PC-3 (cell line): ENCODE measurements at regions of chr10 and their contacts with region 1.

Region 1: GRCh38 chr10:63003816-63004453 is 129.2 kb upstream of the NRBF2 start:
- DNase-seq: peak; percentile 87
- ATAC-seq: peak; percentile 39
- H3K4me3 ChIP-seq: no peak overlapping the region
- H3K27ac ChIP-seq: no peak overlapping the region
- H3K4me1 ChIP-seq: peaks cover 16% of the 10 kb centered on the region
- H3K27me3 ChIP-seq: no peaks in the 10 kb centered on the region
- CTCF ChIP-seq: peak; percentile 99

Region 2: GRCh38 chr10:62492012-62492869 is 511.7 kb before region 1 on chr10:
- CTCF ChIA-PET with region 1: no interaction called
- POLR2A ChIA-PET with region 1: no interaction called
- intact Hi-C with region 1: loop called (anchors 5 kb)
- DNase-seq: peak; percentile 92
- ATAC-seq: peak; percentile 90
- H3K4me3 ChIP-seq: no peak overlapping the region
- H3K27ac ChIP-seq: no peak overlapping the region
- H3K4me1 ChIP-seq: no peaks in the 10 kb centered on the region
- H3K27me3 ChIP-seq: peaks cover 7% of the 10 kb centered on the region; the same call in 1 of the 2 replicates
- CTCF ChIP-seq: peak; percentile 100

Region 3: DNA sequence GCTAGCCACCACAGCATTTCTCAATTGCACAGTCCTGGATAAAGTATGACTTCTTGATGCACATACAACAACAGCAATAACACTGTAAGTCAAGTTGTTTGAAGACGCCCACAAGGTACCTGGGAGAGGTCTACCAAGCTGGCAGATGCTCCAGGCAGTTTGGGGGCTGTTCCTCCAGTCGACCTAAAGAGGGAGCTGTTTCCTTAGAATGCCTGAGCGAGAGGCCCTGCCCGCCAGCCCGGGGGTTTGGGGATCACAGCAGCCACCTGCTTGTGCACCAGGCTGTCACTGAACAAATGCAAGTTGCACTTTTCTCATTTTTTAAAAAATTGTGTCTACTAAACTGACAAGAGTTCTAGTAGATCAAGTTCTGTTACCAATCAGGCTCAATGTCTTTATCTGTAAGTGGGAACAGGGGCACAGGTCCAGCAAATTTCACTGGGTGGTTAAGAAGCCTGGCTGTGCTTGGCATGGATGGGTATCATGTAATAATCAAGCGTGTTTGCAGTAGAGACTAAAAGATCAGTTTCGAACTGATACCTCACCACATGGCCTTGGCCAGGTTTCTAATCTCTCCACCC is 393.2 kb before region 1 on chr10:
- CTCF ChIA-PET with region 1: interaction called, 4 read pairs
- POLR2A ChIA-PET with region 1: no interaction called
- intact Hi-C with region 1: loop called (anchors 2 kb)
- DNase-seq: peak; percentile 99
- ATAC-seq: peak; percentile 72
- H3K4me3 ChIP-seq: no peak overlapping the region
- H3K27ac ChIP-seq: no peak overlapping the region
- H3K4me1 ChIP-seq: peaks cover 29% of the 10 kb centered on the region
- H3K27me3 ChIP-seq: no peaks in the 10 kb centered on the region
- CTCF ChIP-seq: peak; percentile 100

Region 4: GRCh38 chr10:62961951-62962523 is 41.9 kb before region 1 on chr10:
- CTCF ChIA-PET with region 1: interaction called, 6 read pairs
- POLR2A ChIA-PET with region 1: no interaction called
- intact Hi-C with region 1: loop called (anchors 2 kb)
- DNase-seq: peak; percentile 38
- ATAC-seq: no peak
- H3K4me3 ChIP-seq: no peak overlapping the region
- H3K27ac ChIP-seq: no peak overlapping the region
- H3K4me1 ChIP-seq: peaks cover 37% of the 10 kb centered on the region
- H3K27me3 ChIP-seq: no peaks in the 10 kb centered on the region
- CTCF ChIP-seq: no peak

Region 5: GRCh38 chr10:62992145-62992721 is 11.7 kb before region 1 on chr10:
- CTCF ChIA-PET with region 1: interaction called, 11 read pairs
- POLR2A ChIA-PET with region 1: interaction called, 3 read pairs
- intact Hi-C with region 1: no loop called
- DNase-seq: peak; percentile 100
- ATAC-seq: peak; percentile 72
- H3K4me3 ChIP-seq: peak overlapping the region; percentile 45
- H3K27ac ChIP-seq: peak overlapping the region; percentile 76
- H3K4me1 ChIP-seq: peaks cover 72% of the 10 kb centered on the region
- H3K27me3 ChIP-seq: no peaks in the 10 kb centered on the region
- CTCF ChIP-seq: no peak